Caco-2 (cell line): ENCODE measurements at regions of chr12 and their contacts with region 1.

Region 1: DNA sequence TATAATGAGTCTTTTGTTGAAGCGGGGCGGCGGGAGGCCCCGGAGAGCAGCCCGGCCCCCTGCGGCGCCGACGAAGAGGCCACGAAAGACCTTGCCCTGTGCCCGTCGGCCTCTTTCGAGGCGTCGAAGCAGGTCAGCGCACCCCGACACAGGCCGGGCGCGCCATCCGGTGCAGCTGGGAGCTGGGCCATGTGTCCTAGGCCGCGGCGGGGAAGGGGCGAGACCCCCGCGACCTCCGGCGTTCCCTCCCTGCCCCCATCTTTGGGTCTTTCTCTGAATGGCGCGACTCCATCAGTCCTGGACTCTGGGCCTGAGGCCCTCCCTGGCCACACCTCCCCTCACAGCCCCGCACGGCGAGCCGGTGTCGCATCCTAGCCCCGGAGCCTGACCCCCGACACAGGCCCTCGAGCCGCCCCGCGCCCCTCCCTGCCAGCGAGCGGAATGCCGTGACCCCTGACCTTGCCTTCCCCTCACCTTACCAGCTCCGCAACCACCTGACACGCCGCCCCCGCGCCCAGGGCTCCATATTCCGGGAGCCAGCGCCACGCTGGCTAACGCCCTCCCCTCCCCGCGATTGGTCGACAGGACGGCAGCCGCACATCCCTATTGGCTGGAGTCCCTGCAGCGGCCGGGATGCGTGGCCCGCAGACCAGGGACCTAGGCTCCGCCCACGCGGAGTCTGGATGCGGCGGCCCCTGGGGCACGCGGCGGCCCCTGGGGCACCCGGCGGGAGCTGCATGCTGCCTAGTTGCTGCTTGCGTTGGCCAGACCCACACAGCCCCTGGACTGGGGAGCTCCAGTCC is at the start of gene SLC11A2:
- DNase-seq: peak; percentile 98 to 99
- H3K4me3 ChIP-seq: peak within 1 kb of the TSS; percentile 86
- H3K4me3 Mint-ChIP-seq: peak within 1 kb of the TSS; percentile 82
- H3K27ac Mint-ChIP-seq: peak within 1 kb of the TSS; percentile 87
- H3K4me1 ChIP-seq: peaks cover 38% of the 10 kb centered on the region
- H3K4me1 Mint-ChIP-seq: peaks cover 37% of the 10 kb centered on the region
- H3K27me3 ChIP-seq: no peaks in the 10 kb centered on the region
- H3K27me3 Mint-ChIP-seq: no peaks in the 10 kb centered on the region
- CTCF ChIP-seq: peak in 1 of 2 experiments; percentile 43
- total RNA-seq, gene SLC11A2: 97.2 and 115 TPM in 2 replicates

Region 2: DNA sequence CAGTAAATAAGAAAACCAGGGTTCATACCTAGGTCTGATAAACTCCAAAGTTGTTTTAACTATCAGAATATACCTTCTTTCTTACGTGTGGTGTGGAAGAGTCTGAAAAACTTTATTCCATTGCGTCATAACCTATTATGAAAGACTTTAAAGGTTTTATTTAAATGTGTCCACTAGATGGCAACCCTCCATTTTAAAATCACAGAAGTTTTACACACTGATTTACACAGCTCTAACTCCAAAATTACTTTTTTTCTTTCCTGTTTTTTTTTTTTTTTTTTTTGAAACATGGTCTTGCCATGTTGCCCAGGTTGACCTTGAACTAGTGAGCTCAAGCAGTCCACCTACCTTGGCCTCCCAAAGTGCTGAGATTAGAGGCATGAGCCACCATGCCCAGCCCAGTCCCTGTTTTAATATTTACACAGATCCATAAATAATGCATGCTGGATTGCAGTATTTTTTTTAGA is 200.6 kb before region 1 on chr12:
- CTCF ChIA-PET with region 1: interaction called, 67 read pairs
- POLR2A ChIA-PET with region 1: interaction called, 10 read pairs
- intact Hi-C with region 1: loop called (anchors 1 kb)
- DNase-seq: peak in 1 of 2 experiments; percentile 51
- H3K4me3 ChIP-seq: no peak overlapping the region
- H3K4me3 Mint-ChIP-seq: peak overlapping the region; percentile 10
- H3K27ac Mint-ChIP-seq: peak overlapping the region; percentile 9
- H3K4me1 ChIP-seq: no peaks in the 10 kb centered on the region
- H3K4me1 Mint-ChIP-seq: no peaks in the 10 kb centered on the region
- H3K27me3 ChIP-seq: no peaks in the 10 kb centered on the region
- H3K27me3 Mint-ChIP-seq: no peaks in the 10 kb centered on the region
- CTCF ChIP-seq: peak; percentile 46 to 57

Region 3: DNA sequence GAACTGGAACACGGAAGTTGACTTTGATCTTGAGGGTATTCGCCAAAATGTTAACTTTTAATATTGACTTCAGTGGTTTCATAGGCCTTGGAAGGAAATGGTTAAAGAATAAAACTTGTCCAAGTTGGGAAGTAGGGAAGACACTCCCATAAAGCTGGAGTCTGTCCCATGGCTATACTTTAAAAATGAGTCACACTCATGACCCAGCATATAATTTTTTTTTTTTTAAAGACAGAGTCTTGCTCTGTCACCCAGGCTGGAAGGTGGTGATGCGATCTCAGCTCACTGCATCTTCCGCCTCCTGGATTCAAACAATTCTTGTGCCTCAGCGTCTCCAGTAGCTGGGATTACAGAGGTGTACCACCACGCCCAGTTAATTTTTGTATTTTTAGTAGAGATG is 163.7 kb before region 1 on chr12:
- CTCF ChIA-PET with region 1: no interaction called
- POLR2A ChIA-PET with region 1: no interaction called
- intact Hi-C with region 1: no loop called
- DNase-seq: no peak
- H3K4me3 ChIP-seq: no peak overlapping the region
- H3K4me3 Mint-ChIP-seq: no peak overlapping the region
- H3K27ac Mint-ChIP-seq: no peak overlapping the region
- H3K4me1 ChIP-seq: no peaks in the 10 kb centered on the region
- H3K4me1 Mint-ChIP-seq: no peaks in the 10 kb centered on the region
- H3K27me3 ChIP-seq: no peaks in the 10 kb centered on the region
- H3K27me3 Mint-ChIP-seq: peaks cover 3% of the 10 kb centered on the region
- CTCF ChIP-seq: no peak

Region 4: GRCh38 chr12:50986966-50987737 is 38.9 kb before region 1 on chr12:
- CTCF ChIA-PET with region 1: interaction called, 31 read pairs
- POLR2A ChIA-PET with region 1: interaction called, 8 read pairs
- intact Hi-C with region 1: loop called (anchors 1 kb)
- DNase-seq: peak; percentile 71 to 78
- H3K4me3 ChIP-seq: no peak overlapping the region
- H3K4me3 Mint-ChIP-seq: no peak overlapping the region
- H3K27ac Mint-ChIP-seq: no peak overlapping the region
- H3K4me1 ChIP-seq: no peaks in the 10 kb centered on the region
- H3K4me1 Mint-ChIP-seq: peaks cover 16% of the 10 kb centered on the region
- H3K27me3 ChIP-seq: no peaks in the 10 kb centered on the region
- H3K27me3 Mint-ChIP-seq: no peaks in the 10 kb centered on the region
- CTCF ChIP-seq: peak; percentile 63 to 83

Region 5: DNA sequence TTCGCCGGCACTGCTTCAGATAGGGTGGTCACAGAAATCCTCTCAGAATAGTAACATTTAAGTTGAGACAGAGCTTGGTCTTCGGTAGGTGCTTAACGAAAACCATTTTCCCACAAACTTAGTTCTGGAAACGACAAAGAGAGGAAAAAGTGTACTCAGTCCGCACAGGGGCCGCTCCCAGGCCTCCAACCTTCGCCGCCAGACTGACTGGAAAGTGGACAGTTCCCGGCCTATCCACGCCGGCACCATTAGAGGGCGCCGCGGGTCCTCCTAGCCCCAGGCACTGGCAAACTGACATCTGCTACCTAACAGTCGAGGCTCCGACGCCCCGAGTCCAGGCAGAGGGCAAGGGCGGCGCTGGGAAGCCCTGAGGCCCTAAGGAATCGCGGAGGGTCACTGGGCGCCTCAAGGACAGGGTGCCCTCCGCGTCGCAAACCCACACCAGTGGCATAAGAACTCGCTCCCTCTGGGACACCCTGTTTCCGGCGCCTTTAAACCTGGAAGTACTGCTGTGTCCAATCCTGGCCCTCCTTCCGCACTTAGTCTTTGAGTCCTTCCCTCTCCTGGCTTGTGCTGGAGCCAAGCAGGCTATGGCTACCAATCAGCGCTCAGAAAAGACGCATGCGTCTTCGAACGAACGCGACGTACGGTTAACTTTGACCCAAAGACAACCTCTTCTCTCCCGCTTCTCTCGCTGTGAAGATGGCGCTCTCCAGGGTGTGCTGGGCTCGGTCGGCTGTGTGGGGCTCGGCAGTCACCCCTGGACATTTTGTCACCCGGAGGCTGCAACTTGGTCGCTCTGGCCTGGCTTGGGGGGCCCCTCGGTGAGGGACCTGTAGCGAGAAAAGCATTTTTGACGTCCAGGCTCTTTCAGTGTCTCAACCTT is 21.9 kb after region 1 on chr12 and contains the start of gene LETMD1:
- CTCF ChIA-PET with region 1: interaction called, 4 read pairs
- POLR2A ChIA-PET with region 1: interaction called, 4 read pairs
- intact Hi-C with region 1: loop called (anchors 1 kb)
- DNase-seq: peak; percentile 96 to 98
- H3K4me3 ChIP-seq: peak within 1 kb of the TSS; percentile 64
- H3K4me3 Mint-ChIP-seq: peak within 1 kb of the TSS; percentile 99
- H3K27ac Mint-ChIP-seq: peak within 1 kb of the TSS; percentile 96
- H3K4me1 ChIP-seq: no peaks in the 10 kb centered on the region
- H3K4me1 Mint-ChIP-seq: no peaks in the 10 kb centered on the region
- H3K27me3 ChIP-seq: no peaks in the 10 kb centered on the region
- H3K27me3 Mint-ChIP-seq: no peaks in the 10 kb centered on the region
- CTCF ChIP-seq: peak; percentile 93 to 99
- total RNA-seq, gene LETMD1: 90.6 and 95.6 TPM in 2 replicates

Region 6: DNA sequence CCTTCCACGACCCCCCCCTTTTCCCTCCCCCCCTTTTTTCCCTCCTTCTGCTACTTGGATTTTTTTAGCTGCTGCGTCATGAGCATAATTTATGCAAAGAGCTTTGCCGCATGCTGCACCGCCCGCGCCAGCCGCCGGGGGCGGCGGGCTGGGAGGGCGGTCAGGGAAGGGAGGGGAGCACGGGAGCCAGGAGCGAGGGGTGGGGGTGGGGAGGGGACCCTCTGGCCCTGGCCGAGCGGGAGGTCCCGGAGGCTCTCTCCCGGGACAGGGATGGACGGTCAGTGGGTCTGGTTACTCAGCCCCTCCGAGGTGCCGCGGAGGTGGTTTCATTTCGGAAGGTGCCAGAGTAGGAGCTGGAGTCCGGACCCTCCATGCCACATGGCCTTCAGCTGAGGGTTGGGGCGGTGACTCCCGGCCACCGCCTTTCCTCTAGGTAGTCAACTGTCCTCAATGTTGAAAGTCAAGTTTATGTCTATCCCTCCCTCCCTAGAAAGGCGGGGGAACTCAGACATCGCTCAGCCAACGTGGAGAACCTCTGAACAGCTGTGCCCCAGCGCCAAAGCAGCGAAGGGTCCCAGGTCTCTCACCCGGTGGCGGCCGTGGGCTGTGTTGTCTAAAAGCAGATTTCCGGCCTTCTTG is 192.1 kb after region 1 on chr12 and contains the start of gene POU6F1:
- CTCF ChIA-PET with region 1: interaction called, 11 read pairs
- POLR2A ChIA-PET with region 1: interaction called, 4 read pairs
- intact Hi-C with region 1: no loop called
- DNase-seq: peak; percentile 77 to 87
- H3K4me3 ChIP-seq: peak within 1 kb of the TSS; percentile 89
- H3K4me3 Mint-ChIP-seq: peak within 1 kb of the TSS; percentile 76
- H3K27ac Mint-ChIP-seq: peak within 1 kb of the TSS; percentile 94
- H3K4me1 ChIP-seq: peaks cover 6% of the 10 kb centered on the region; the same call in 1 of the 2 replicates
- H3K4me1 Mint-ChIP-seq: peaks cover 20% of the 10 kb centered on the region
- H3K27me3 ChIP-seq: no peaks in the 10 kb centered on the region
- H3K27me3 Mint-ChIP-seq: no peaks in the 10 kb centered on the region
- CTCF ChIP-seq: peak; percentile 75 to 84
- total RNA-seq, gene POU6F1: 4.1 and 5.3 TPM in 2 replicates